ENCODE measurements at regions of chr17 and their contacts with region 1.

Region 1: DNA sequence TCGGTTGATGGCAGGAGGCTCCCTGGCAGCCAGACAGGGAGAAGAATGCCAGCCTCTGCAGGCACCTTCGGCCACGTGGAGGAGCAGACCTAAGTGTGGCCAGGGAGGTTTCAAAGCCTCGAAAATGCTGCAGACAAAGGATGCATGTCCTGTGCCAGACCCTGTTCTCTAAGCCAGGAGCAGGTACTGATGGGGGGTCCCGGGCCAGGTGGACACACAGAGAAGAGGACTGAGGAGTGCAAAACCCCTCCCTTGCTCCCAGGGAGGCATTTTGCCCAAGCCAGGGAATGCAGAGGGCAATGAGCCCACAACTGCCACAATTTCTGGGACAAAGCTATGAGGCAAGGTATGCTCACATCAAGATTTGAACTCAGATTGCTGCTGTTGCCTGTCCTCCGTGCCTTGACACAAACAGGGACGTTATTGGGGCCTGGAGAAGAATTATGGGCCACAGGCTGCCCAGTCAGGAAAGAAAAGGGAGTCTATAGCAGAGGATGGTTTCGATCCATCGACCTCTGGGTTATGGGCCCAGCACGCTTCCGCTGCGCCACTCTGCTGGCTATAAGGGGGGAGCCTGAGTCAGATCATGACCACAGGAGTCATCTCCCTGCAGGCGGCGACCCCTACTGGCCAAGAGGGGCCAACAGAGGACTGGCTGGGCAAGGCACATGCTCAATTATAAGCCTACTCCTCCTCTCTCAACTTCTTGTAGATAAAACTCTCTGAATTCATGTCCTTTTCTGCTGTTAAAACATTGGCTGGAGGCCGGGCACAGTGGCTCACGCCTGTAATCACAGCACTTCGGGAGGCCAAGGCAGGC is 25.1 kb upstream of the FOXK2 start:
- DNase-seq: peak; percentile 91 to 95 (median 93)
- H3K4me3 ChIP-seq: no peak overlapping the region
- H3K27ac ChIP-seq: peak overlapping the region in 1 of 2 donors; percentile 29
- H3K4me1 ChIP-seq: peaks cover 3% of the 10 kb centered on the region
- H3K27me3 ChIP-seq: no peaks in the 10 kb centered on the region
- CTCF ChIP-seq: peak; percentile 79 to 91 (median 91)
- EP300 ChIP-seq: no peak
- POLR2A ChIP-seq: peak; percentile 20

Region 2: DNA sequence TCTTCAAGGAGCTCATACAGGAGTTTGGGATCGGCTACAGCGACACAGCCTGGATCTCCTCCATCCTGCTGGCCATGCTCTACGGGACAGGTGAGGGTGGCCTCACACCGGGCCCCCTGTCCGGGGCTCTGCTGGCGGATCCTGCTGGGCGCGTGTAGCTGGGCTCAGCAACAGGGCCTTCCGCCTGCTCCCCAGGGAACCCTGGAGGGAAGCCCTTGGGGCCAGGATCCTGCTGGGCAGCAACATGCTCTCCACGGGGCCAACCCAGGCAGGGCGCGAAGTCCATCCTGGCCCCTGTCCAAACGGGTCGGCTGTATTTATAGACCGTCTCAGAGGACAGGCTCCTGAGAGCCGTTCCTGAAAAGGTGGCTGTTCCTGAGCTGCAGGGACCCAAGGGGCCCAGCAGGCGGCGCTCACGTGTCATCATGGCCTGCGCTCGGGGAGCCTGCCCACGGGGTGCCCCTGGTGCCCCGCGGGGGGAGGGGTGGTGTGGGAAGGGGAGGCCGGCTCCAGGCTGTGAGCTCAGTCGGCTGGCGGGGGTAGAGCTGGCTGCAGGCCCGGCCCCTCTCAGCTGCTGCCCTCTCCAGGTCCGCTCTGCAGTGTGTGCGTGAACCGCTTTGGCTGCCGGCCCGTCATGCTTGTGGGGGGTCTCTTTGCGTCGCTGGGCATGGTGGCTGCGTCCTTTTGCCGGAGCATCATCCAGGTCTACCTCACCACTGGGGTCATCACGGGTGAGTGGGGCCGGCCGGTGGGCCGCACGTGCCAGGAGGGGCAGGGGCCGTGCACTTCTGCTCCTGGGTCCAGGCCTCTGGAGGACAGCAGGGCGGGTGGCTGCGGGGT is 258.1 kb before region 1 on chr17:
- intact Hi-C with region 1: no loop called
- DNase-seq: peak; percentile 68 to 85 (median 81)
- H3K4me3 ChIP-seq: no peak overlapping the region
- H3K27ac ChIP-seq: peak overlapping the region; percentile 1 to 60
- H3K4me1 ChIP-seq: peaks cover 54% of the 10 kb centered on the region
- H3K27me3 ChIP-seq: no peaks in the 10 kb centered on the region
- CTCF ChIP-seq: peak; percentile 85 to 91 (median 89)
- EP300 ChIP-seq: no peak
- POLR2A ChIP-seq: no peak

Region 3: DNA sequence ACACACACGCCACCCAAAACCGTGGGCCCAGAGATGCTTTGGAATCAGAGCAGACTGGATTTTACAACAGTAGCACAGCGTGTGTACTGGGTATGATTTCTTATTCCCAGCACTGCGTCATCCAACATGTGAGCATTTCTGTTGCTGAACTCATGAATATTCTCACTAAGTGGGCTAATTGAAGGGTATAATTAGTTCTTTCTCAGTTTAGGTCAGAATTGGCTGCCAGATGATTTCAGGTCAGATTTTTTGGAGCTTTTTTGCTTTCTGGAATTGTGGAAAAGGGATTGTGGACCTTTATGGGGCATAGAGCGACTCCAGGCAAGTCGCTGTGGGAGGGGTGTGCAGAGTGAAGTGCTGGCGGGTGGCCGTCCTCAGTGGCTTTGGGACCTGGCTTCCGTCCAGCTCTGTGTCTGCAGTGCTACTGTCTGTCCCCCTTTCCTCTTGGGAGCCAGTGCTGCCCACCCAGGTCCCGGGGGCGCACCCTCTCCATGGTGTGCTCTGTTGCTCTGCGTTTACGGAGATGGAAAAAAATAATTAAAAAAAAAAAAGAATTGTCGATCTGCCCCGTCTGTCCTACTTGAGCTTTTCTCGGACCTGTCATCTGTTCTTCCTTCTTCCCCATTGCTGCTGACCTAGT is 50.1 kb after region 1 on chr17:
- intact Hi-C with region 1: loop called in 1 of 4 experiments (anchors 5 kb)
- DNase-seq: peak in 3 of 5 donors; percentile 43 to 61 (median 45)
- H3K4me3 ChIP-seq: peak overlapping the region; percentile 17
- H3K27ac ChIP-seq: peak overlapping the region in 1 of 2 donors; percentile 61
- H3K4me1 ChIP-seq: peaks cover 12% of the 10 kb centered on the region
- H3K27me3 ChIP-seq: no peaks in the 10 kb centered on the region
- CTCF ChIP-seq: no peak
- EP300 ChIP-seq: no peak
- POLR2A ChIP-seq: no peak

Region 4: GRCh38 chr17:82551779-82552457 is 57.5 kb after region 1 on chr17:
- intact Hi-C with region 1: loop called in 2 of 4 experiments (anchors 5 to 10 kb)
- DNase-seq: peak; percentile 72 to 85 (median 78)
- H3K4me3 ChIP-seq: no peak overlapping the region
- H3K27ac ChIP-seq: no peak overlapping the region
- H3K4me1 ChIP-seq: peaks cover 14% of the 10 kb centered on the region
- H3K27me3 ChIP-seq: no peaks in the 10 kb centered on the region
- CTCF ChIP-seq: peak; percentile 65 to 82 (median 81)
- EP300 ChIP-seq: no peak
- POLR2A ChIP-seq: no peak

Measured in ovary (tissue), 10 donors.